Activated T-helper 1 cell treated with anti-CD3 and anti-CD28 coated beads, Interleukin-12 subunit alpha, Interleukin-12 subunit beta, Interleukin-2, Interleukin-4 antibody, amounts not matched to agents 30 ng/mL and 10 ng/mL and 1 ng/mL, durations not matched to agents 14 hours and 24 hours and 36 hours (primary cell): ENCODE measurements at regions of chr3 and their contacts with region 1.

Region 1: DNA sequence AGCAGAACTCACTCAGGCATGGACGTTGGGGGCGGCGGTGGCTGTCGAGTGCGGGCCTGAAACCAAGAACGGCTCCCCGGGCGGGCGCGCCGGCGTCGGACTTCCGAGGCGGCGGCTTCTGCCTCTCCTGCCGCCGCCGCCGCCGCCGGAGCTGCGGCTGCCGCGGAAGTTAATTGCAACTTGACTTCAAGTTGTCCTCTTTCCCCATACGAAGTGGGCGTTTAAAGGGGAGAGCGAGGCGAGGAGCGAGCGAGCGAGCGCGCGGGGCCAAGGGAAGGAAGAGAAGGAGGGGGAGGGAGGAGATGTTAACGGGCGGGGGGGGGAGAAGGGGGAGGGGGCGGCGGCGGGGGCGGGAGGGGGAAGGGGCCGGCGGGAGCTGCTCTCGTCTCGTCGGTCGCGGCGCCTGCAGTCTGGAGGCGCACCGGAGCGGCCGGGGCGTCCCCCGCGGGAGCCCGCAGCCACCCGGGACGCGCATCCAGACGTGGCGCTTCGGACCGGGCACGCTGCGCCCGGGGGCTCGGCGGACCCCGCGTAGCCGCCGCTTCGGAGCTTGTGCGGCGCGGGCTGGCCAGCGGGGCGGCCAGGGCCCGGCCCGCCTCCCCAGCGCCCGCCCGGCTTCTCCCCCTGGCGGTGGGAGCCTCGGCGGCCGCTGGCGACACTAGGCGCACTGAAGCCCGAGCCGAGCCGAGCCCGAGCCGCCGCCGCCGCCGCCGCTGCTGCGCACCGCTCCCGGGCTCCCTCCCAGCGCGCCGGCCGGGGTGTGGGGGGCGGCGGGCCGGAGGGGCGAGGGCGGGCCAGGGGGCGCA is 19.7 kb upstream of the SATB1 start:
- DNase-seq: peak; percentile 75
- H3K4me3 Mint-ChIP-seq: peak overlapping the region; percentile 99
- H3K27ac Mint-ChIP-seq: peak overlapping the region; percentile 97
- H3K4me1 Mint-ChIP-seq: peaks cover 54% of the 10 kb centered on the region
- H3K27me3 Mint-ChIP-seq: peaks cover 1% of the 10 kb centered on the region

Region 2: GRCh38 chr3:17949101-17949500 is 495.7 kb before region 1 on chr3:
- intact Hi-C with region 1: no loop called
- DNase-seq: no peak
- H3K4me3 Mint-ChIP-seq: no peak overlapping the region
- H3K27ac Mint-ChIP-seq: no peak overlapping the region
- H3K4me1 Mint-ChIP-seq: no peaks in the 10 kb centered on the region
- H3K27me3 Mint-ChIP-seq: peaks cover 3% of the 10 kb centered on the region

Region 3: GRCh38 chr3:18424729-18425640 is 19.8 kb before region 1 on chr3 and contains the start of gene SATB1:
- intact Hi-C with region 1: loop called (anchors 2 kb)
- DNase-seq: peak; percentile 54
- H3K4me3 Mint-ChIP-seq: peak within 1 kb of the TSS; percentile 91
- H3K27ac Mint-ChIP-seq: peak within 1 kb of the TSS; percentile 94
- H3K4me1 Mint-ChIP-seq: peaks cover 72% of the 10 kb centered on the region
- H3K27me3 Mint-ChIP-seq: peaks cover 6% of the 10 kb centered on the region
- total RNA-seq, gene SATB1: 679 and 686 TPM in 2 replicates

Region 4: GRCh38 chr3:18559331-18559842 is 114.6 kb after region 1 on chr3:
- intact Hi-C with region 1: loop called (anchors 1 kb)
- DNase-seq: peak; percentile 27
- H3K4me3 Mint-ChIP-seq: peak overlapping the region; percentile 64
- H3K27ac Mint-ChIP-seq: peak overlapping the region; percentile 90
- H3K4me1 Mint-ChIP-seq: peaks cover 66% of the 10 kb centered on the region
- H3K27me3 Mint-ChIP-seq: no peaks in the 10 kb centered on the region

Region 5: GRCh38 chr3:18679238-18679637 is 234.4 kb after region 1 on chr3:
- intact Hi-C with region 1: loop called (anchors 1 kb)
- DNase-seq: peak; percentile 62
- H3K4me3 Mint-ChIP-seq: peak overlapping the region; percentile 19
- H3K27ac Mint-ChIP-seq: peak overlapping the region; percentile 77
- H3K4me1 Mint-ChIP-seq: peaks cover 89% of the 10 kb centered on the region
- H3K27me3 Mint-ChIP-seq: no peaks in the 10 kb centered on the region

Region 6: GRCh38 chr3:18758047-18758704 is 313.4 kb after region 1 on chr3:
- intact Hi-C with region 1: loop called (anchors 1 kb)
- DNase-seq: peak; percentile 50
- H3K4me3 Mint-ChIP-seq: no peak overlapping the region
- H3K27ac Mint-ChIP-seq: peak overlapping the region; percentile 73
- H3K4me1 Mint-ChIP-seq: peaks cover 50% of the 10 kb centered on the region
- H3K27me3 Mint-ChIP-seq: no peaks in the 10 kb centered on the region